Activated T-helper 2 cell treated with anti-CD3 and anti-CD28 coated beads, Interferon-gamma antibody, Interleukin-2, Interleukin-4, amounts not matched to agents 10 μg/mL and 5 μg/mL and 100 μg/mL, durations not matched to agents 14 hours and 24 hours and 36 hours (primary cell): ENCODE measurements at regions of chr3 and their contacts with region 1.

Region 1: GRCh38 chr3:108100906-108101660 is 10.3 kb upstream of the CD47 start:
- DNase-seq: no peak
- H3K4me3 Mint-ChIP-seq: peak overlapping the region; percentile 34
- H3K27ac Mint-ChIP-seq: peak overlapping the region; percentile 69
- H3K4me1 Mint-ChIP-seq: peaks cover 45% of the 10 kb centered on the region
- H3K27me3 Mint-ChIP-seq: peaks cover 2% of the 10 kb centered on the region

Region 2: GRCh38 chr3:108118038-108118768 is 17.1 kb after region 1 on chr3:
- intact Hi-C with region 1: loop called (anchors 1 kb)
- DNase-seq: no peak
- H3K4me3 Mint-ChIP-seq: no peak overlapping the region
- H3K27ac Mint-ChIP-seq: peak overlapping the region; percentile 76
- H3K4me1 Mint-ChIP-seq: peaks cover 44% of the 10 kb centered on the region
- H3K27me3 Mint-ChIP-seq: peaks cover under 1% of the 10 kb centered on the region

Region 3: GRCh38 chr3:108124337-108125152 is 23.5 kb after region 1 on chr3:
- intact Hi-C with region 1: loop called (anchors 1 kb)
- DNase-seq: peak; percentile 68
- H3K4me3 Mint-ChIP-seq: peak overlapping the region; percentile 96
- H3K27ac Mint-ChIP-seq: peak overlapping the region; percentile 99
- H3K4me1 Mint-ChIP-seq: peaks cover 66% of the 10 kb centered on the region
- H3K27me3 Mint-ChIP-seq: no peaks in the 10 kb centered on the region